Dorsolateral prefrontal cortex (tissue), 120 donors: ENCODE measurements at regions of chr7 and their contacts with region 1.

Region 1: DNA sequence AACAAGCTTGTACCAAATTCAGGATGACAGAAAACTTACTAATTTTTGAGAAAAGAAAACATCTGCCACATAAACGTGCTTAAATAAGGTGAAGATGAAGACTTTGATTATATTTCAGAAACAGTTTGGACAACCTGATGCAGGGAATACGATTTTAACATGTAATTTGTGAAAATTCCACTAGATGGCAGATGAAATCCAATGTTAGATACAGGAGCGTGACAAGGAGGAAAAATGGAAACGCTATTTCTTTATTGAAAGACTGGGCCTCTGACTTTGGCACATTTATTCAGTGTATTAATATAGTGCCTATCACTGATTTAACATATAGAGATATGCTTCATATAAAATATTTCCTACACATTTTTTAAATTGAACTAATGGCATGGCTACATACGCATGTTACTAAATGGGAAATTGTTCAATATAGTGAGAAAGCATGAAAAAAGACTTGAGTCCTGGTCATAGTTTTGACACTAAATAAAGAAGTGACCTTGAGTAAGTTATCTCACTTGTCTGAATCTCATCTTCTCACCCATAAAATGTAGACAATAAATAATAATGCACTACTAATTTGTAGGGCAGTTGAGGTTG is 60.7 kb downstream of the CD36 start:
- DNase-seq: no peak
- H3K4me3 ChIP-seq: no peak overlapping the region
- H3K27ac ChIP-seq: no peak overlapping the region
- H3K27me3 ChIP-seq: peaks cover 0 to 2% (median 0%) of the 10 kb centered on the region in 45 donors
- CTCF ChIP-seq: peak; percentile 58 to 98 (median 86)

Region 2: DNA sequence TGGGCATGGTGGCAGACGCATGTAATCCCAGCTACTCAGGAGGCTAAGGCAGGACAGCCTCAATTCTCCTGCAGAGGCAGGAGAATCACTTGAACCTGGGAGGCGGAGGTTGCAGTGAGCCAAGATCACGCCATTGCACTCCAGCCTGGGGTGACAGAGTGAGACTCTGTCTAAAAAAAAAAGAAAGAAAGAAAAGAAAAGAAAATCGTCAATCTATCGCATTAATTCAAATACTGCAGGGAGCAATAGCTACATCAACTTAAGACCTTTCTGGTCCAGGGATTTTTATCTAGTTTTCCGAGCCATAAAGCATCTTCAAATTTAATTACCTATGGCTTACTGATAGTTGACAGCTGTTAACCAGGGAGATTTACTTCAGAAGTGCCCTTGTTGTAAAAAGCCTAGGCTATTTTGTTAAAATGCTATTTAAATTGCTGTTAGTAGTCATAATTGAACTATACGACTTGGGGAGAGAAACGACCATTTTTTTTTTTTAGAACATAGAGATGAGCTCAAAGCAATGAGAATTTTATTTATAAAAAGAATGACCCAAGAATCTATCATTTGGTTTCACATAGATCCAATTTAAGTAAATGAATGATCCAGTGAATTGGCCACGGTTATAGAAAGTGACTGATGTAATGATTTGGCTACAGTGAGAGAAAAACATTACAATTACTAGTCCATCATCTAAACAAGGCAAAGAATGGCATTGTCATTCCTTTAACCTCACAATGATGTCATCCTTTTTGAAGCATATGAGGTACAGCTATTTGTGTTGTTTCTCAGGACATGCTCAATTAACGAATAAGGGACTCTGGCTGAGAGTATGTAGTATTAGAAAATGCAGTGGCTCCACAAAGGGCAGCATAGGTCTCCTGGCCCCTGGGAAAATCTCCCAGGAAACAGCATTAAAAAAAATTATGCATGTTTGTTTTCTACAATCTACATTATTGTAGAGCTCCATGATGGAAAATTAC is 134.4 kb after region 1 on chr7:
- intact Hi-C with region 1: no loop called
- DNase-seq: no peak
- H3K4me3 ChIP-seq: no peak overlapping the region
- H3K27ac ChIP-seq: peak overlapping the region in 1 of 59 donors; percentile 8
- H3K27me3 ChIP-seq: no peaks in the 10 kb centered on the region
- CTCF ChIP-seq: no peak

Region 3: DNA sequence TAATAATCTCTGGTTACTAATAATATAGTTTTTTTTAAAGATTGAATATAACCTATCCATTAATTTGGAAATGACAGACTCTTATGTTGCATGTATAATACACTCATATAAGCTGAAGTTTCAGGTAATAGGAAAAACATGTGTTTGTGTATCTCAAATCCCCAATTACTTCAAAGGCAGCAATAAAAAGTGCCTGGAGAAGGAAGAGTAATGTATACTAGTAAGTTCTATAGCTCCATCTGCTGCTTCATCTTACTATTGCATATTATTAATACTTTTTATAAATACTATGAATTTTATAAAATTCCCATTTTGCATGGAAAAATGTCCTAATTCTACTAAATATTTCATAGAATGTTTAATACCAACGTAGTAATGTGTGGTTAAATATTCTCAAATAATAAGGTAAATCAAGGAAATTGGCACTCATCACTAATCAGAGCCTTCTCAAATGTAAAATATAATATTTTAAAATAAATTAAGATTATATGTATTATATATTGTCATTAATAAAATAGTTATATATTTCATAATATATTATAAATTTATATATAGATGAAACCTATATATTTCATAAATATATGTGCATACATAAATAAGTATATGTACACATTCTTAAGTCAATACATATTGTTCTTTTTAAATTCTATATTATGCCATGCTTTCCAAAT is 758.8 kb after region 1 on chr7:
- intact Hi-C with region 1: loop called in 1 of 2 experiments (anchors 5 kb)
- DNase-seq: no peak
- H3K4me3 ChIP-seq: no peak overlapping the region
- H3K27ac ChIP-seq: no peak overlapping the region
- H3K27me3 ChIP-seq: peaks cover 0 to 3% (median 0%) of the 10 kb centered on the region in 45 donors
- CTCF ChIP-seq: peak in 55 of 56 donors; percentile 20 to 69 (median 45)